Ascending aorta (tissue), 2 donors: ENCODE measurements at regions of chr13 and their contacts with region 1.

Region 1: DNA sequence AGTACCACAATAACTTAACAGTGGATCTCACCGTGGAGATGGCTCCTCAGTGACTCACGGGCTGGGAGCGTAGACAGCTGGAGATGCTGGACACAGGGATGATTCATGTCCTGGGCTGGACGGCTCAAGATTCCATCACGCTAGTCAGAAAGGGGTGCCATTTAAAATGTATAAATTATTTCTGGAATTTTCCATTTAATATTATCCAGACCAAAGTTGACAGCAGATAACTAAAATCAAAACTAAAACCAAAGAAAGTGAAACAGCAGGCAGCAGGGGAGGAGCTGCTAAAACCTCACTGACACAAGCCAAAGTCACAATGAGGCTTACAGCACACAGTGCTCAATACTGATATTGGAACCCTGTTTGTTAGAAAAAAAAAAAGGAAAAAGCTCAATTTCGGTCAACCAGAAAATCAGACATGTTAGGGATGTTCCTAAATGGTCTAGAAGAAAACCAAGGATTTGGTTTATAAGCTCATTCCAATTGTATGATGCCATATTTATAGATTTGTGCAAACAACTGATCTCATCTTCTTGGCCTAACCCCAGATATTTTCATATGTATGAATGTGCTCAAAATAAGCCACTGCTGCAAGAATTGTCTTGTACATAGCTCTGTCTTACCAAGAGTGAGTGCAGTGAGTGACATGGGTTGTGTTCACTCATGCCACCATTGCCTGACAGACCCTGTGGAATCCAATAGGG is 111.8 kb downstream of the SACS start:
- DNase-seq: peak in 1 of 2 donors; percentile 92
- H3K4me3 ChIP-seq: peak overlapping the region; percentile 31 to 42
- H3K27ac ChIP-seq: peak overlapping the region; percentile 63 to 86
- H3K4me1 ChIP-seq: peaks cover 0 to 11% of the 10 kb centered on the region in 2 donors
- H3K27me3 ChIP-seq: no peaks in the 10 kb centered on the region
- CTCF ChIP-seq: no peak

Region 2: GRCh38 chr13:21603531-21604448 is 1717.9 kb before region 1 on chr13 and contains the start of gene MICU2:
- intact Hi-C with region 1: loop called (anchors 5 kb)
- DNase-seq: peak; percentile 71 to 95
- H3K4me3 ChIP-seq: peak within 1 kb of the TSS; percentile 73 to 74
- H3K27ac ChIP-seq: peak within 1 kb of the TSS; percentile 79 to 94
- H3K4me1 ChIP-seq: peaks cover 0 to 5% of the 10 kb centered on the region in 2 donors
- H3K27me3 ChIP-seq: no peaks in the 10 kb centered on the region
- CTCF ChIP-seq: peak in 1 of 3 experiments; percentile 37
- total RNA-seq, gene MICU2: 41.5 TPM

Region 3: DNA sequence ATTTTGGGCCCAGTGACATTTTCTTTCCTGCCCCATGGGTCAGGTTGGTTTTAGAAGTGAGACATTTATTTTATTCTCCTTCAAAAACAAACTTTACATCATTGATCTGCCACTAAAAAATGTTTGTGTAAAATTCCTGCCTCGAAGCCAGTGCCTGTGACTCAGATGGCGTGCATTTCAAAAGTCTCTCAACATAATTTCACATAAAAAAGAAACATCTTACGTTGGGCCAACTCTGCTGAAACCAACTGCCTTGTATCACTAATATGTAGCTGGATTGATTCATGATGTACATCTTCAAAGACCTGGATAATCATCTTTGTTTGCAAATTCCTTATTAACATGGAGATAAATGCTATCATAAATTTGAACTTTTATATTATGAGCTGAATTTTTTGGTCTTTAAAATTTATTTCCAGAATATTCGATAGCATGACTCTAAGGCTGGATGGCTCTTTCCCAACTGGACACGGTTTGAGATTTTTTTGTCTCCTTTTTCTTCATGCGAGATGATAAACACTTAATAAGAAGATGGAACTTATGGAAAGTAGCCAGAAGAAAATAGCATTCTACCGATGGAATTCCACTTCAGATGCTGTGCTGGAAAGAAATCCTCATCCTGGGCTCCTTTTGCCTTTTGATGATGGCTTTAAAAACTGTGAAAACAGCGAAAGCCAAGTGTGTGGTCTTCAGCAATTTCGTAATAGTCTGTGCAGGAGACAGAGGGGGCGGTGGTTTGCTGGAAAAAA is 1230.3 kb before region 1 on chr13:
- intact Hi-C with region 1: loop called (anchors 10 kb)
- DNase-seq: no peak
- H3K4me3 ChIP-seq: no peak overlapping the region
- H3K27ac ChIP-seq: peak overlapping the region in 1 of 2 donors; percentile 19
- H3K4me1 ChIP-seq: peaks cover 0 to 10% of the 10 kb centered on the region in 2 donors
- H3K27me3 ChIP-seq: no peaks in the 10 kb centered on the region
- CTCF ChIP-seq: no peak

Region 4: GRCh38 chr13:22801402-22802003 is 520.2 kb before region 1 on chr13:
- intact Hi-C with region 1: loop called (anchors 2 kb)
- DNase-seq: no peak
- H3K4me3 ChIP-seq: no peak overlapping the region
- H3K27ac ChIP-seq: no peak overlapping the region
- H3K4me1 ChIP-seq: no peaks in the 10 kb centered on the region
- H3K27me3 ChIP-seq: no peaks in the 10 kb centered on the region
- CTCF ChIP-seq: peak in 2 of 3 experiments; percentile 9 to 14

Region 5: GRCh38 chr13:23020223-23020843 is 301.4 kb before region 1 on chr13:
- intact Hi-C with region 1: loop called (anchors 2 kb)
- DNase-seq: peak in 1 of 2 donors; percentile 64
- H3K4me3 ChIP-seq: no peak overlapping the region
- H3K27ac ChIP-seq: no peak overlapping the region
- H3K4me1 ChIP-seq: no peaks in the 10 kb centered on the region
- H3K27me3 ChIP-seq: no peaks in the 10 kb centered on the region
- CTCF ChIP-seq: peak; percentile 17 to 69 (median 68)

Region 6: GRCh38 chr13:23119131-23119530 is 202.6 kb before region 1 on chr13:
- intact Hi-C with region 1: no loop called
- DNase-seq: no peak
- H3K4me3 ChIP-seq: no peak overlapping the region
- H3K27ac ChIP-seq: no peak overlapping the region
- H3K4me1 ChIP-seq: no peaks in the 10 kb centered on the region
- H3K27me3 ChIP-seq: no peaks in the 10 kb centered on the region
- CTCF ChIP-seq: no peak

Region 7: DNA sequence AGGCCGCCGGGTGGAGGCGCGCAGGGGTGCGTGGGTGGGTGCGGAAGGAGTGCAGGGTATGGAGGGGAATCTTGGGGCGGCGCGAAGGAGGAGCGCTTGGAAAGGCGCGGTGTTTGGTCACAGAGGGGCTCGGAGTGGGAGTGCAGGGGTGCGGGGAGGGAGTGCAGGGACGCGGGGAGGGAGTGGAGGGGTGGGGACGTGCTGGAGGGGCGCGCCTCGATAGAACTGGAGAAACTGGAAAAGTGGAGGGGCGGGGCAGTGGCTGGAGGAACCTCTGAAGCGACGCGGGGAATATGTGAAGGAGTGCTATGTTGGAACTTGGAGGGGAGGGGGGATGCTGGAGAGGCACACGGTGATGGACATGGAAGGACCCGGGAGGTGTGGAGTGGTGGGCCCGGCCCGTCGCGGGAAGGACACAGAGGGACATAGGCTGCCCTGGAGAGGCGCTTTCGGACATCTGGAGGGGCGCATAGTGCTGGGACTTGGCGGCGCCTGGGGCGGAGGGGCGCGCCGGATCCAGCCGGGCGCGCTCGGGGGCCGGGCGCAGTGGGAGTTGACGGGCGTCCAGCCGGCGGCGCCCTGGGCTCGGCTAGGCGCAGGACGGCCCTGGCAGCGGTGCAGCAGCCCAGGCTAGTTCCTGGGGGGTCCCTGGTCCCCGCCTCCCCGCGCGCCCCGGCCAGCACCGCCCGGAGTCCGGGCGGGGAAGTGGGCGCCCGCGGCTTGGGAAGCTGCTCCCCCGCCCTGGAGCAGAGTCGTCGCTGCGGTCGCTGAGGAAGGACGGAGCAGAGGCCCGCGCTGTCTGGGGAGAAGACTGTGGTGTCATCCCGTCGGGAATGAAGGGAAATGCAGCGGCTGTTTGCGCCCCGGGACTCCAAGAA is 161.7 kb before region 1 on chr13:
- intact Hi-C with region 1: loop called (anchors 5 kb)
- DNase-seq: no peak
- H3K4me3 ChIP-seq: peak overlapping the region; percentile 46 to 60
- H3K27ac ChIP-seq: no peak overlapping the region
- H3K4me1 ChIP-seq: no peaks in the 10 kb centered on the region
- H3K27me3 ChIP-seq: no peaks in the 10 kb centered on the region
- CTCF ChIP-seq: no peak

Region 8: GRCh38 chr13:23279321-23279720 is 42.4 kb before region 1 on chr13:
- intact Hi-C with region 1: no loop called
- DNase-seq: no peak
- H3K4me3 ChIP-seq: no peak overlapping the region
- H3K27ac ChIP-seq: no peak overlapping the region
- H3K4me1 ChIP-seq: no peaks in the 10 kb centered on the region
- H3K27me3 ChIP-seq: no peaks in the 10 kb centered on the region
- CTCF ChIP-seq: no peak

Region 9: DNA sequence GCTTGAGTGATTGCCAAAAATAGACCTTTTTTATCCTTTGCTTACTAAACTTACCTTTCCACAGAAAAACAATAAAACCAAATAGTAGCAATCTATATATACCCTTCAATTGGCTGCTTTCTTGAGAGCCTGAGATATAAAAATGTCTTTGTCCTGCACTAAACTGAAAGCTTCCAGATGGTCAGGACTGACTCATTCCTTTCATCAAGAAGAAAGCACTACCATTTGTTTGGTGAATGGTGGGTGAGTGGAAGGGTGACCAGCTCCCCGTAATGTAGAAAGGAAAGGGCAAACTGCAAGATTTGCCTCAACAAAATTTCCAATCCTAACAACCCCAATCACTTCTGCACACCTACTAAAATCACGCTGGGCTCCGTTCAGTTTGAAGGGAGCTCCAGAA is 44.0 kb after region 1 on chr13:
- intact Hi-C with region 1: no loop called
- DNase-seq: no peak
- H3K4me3 ChIP-seq: no peak overlapping the region
- H3K27ac ChIP-seq: no peak overlapping the region
- H3K4me1 ChIP-seq: peaks cover 0 to 3% of the 10 kb centered on the region in 2 donors
- H3K27me3 ChIP-seq: no peaks in the 10 kb centered on the region
- CTCF ChIP-seq: no peak

Region 10: DNA sequence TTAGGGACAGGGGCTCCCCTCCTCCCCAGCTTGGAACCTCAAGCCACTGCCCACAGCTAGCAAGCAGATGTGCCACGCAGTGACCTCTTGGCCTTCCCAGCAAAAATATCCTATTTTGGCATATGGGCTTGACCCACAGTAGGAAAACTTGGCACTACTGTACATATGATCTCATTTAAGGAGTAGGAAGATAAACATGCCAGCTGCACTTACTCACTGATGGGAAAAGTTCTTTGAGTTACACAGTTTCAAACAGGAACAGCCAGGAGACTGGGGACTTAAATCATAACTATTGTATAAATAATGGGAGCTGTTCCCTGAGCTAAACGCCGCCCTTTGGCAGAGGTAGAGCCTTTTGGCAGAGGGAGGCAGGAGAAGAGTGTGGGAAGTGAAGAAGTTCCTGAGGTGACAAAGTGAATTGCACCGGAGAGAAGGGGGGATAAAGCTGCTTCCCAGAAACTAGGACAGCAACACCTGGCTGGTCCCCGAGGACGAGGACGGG is 105.7 kb after region 1 on chr13:
- intact Hi-C with region 1: loop called (anchors 5 kb)
- DNase-seq: peak in 1 of 2 donors; percentile 88
- H3K4me3 ChIP-seq: peak overlapping the region; percentile 24 to 47
- H3K27ac ChIP-seq: peak overlapping the region; percentile 78 to 88
- H3K4me1 ChIP-seq: peaks cover 4 to 18% of the 10 kb centered on the region in 2 donors
- H3K27me3 ChIP-seq: no peaks in the 10 kb centered on the region
- CTCF ChIP-seq: no peak